K562 (cell line): ENCODE measurements at regions of chr1 and their contacts with region 1.

Region 1: DNA sequence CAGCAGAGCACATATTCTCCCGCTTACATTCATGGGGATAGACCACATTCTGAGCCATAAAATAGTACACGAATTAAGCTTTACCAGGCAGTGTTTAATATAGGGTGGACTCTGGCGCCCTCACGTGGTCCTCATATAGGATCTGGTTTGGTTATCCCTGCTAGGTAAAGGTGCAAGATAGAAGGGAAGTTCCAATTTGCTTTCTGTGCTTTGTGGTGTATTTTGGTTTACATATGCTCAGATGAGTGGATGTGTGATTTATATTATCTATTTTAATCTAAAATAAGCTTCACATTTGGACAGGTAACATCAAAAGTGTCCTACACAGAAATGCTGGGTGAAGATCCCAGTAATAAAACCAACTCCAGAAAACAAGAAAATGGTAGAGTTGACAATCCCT is 3.6 kb downstream of the CR1 start:
- DNase-seq: peak; percentile 70 to 91 (median 76)
- ATAC-seq: peak; percentile 90
- H3K4me3 ChIP-seq: no peak overlapping the region
- H3K27ac ChIP-seq: peak overlapping the region; percentile 20; the same call in 1 of the 3 replicates
- H3K4me1 ChIP-seq: peaks cover 10 to 23% of the 10 kb centered on the region in 2 experiments
- H3K27me3 ChIP-seq: no peaks in the 10 kb centered on the region
- CTCF ChIP-seq: peak; percentile 86 to 97 (median 88)
- EP300 ChIP-seq: no peak; the same call in 1 of the 2 replicates
- POLR2A ChIP-seq: no peak
- RAD21 ChIP-seq: peak; percentile 96 to 98

Region 2: GRCh38 chr1:206734499-206735142 is 765.0 kb before region 1 on chr1:
- CTCF ChIA-PET with region 1: no interaction called
- POLR2A ChIA-PET with region 1: no interaction called
- in situ Hi-C with region 1: no loop called
- intact Hi-C with region 1: loop called (anchors 5 kb)
- DNase-seq: peak; percentile 72 to 79 (median 76)
- ATAC-seq: peak; percentile 84
- H3K4me3 ChIP-seq: no peak overlapping the region
- H3K27ac ChIP-seq: no peak overlapping the region
- H3K4me1 ChIP-seq: peaks cover 10 to 17% of the 10 kb centered on the region in 2 experiments
- H3K27me3 ChIP-seq: no peaks in the 10 kb centered on the region; a peak in 1 of 5 replicates
- CTCF ChIP-seq: peak; percentile 89 to 96 (median 89)
- EP300 ChIP-seq: no peak
- POLR2A ChIP-seq: no peak
- RAD21 ChIP-seq: peak; percentile 88 to 89

Region 3: DNA sequence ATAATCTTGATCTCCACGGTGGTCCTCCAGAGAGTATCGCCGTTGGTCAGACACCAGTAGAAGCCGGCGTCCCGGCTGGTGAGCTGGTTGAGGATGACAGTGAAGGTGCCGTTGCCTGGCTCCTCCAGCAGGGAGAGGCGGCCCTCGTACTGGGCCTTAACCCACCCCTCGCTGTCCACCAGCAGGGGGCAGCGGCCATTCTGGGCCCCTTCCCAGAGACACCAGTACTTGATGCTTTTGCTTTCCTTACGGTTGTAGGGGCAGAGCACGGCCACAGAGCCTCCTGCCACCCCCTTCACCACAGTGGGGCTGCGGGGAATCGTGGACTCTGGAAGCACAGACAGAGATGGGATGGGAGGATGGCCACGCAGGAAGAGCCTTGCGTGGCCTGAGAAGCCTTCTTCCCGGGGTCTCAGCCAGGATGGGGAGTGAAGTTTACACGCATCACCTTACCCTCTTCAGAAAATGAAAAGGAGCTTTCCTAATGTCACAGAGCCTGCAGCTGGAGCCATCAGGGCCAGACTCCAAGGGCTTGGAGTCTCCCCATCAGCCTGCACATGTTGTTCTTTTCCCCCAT is 564.0 kb before region 1 on chr1:
- CTCF ChIA-PET with region 1: no interaction called
- POLR2A ChIA-PET with region 1: no interaction called
- in situ Hi-C with region 1: no loop called
- intact Hi-C with region 1: loop called (anchors 5 kb)
- DNase-seq: peak; percentile 91 to 96 (median 92)
- ATAC-seq: peak; percentile 99
- H3K4me3 ChIP-seq: no peak overlapping the region
- H3K27ac ChIP-seq: no peak overlapping the region
- H3K4me1 ChIP-seq: peaks cover 9% of the 10 kb centered on the region in 2 experiments; a peak in 4 of 5 replicates
- H3K27me3 ChIP-seq: no peaks in the 10 kb centered on the region
- CTCF ChIP-seq: peak; percentile 100
- EP300 ChIP-seq: peak; percentile 31; the same call in 1 of the 2 replicates
- POLR2A ChIP-seq: no peak
- RAD21 ChIP-seq: peak; percentile 99

Region 4: GRCh38 chr1:207181838-207182237 is 317.7 kb before region 1 on chr1:
- CTCF ChIA-PET with region 1: interaction called, 3 read pairs
- POLR2A ChIA-PET with region 1: no interaction called
- in situ Hi-C with region 1: no loop called
- intact Hi-C with region 1: loop called (anchors 5 kb)
- DNase-seq: peak in 1 of 4 experiments; percentile 28
- ATAC-seq: peak; percentile 41; the same call in 1 of the 3 replicates
- H3K4me3 ChIP-seq: no peak overlapping the region
- H3K27ac ChIP-seq: no peak overlapping the region
- H3K4me1 ChIP-seq: no peaks in the 10 kb centered on the region
- H3K27me3 ChIP-seq: no peaks in the 10 kb centered on the region
- CTCF ChIP-seq: peak in 2 of 3 experiments; percentile 29 to 66; a peak in 3 of 6 replicates
- EP300 ChIP-seq: no peak
- POLR2A ChIP-seq: no peak
- RAD21 ChIP-seq: peak; percentile 87 to 93

Region 5: DNA sequence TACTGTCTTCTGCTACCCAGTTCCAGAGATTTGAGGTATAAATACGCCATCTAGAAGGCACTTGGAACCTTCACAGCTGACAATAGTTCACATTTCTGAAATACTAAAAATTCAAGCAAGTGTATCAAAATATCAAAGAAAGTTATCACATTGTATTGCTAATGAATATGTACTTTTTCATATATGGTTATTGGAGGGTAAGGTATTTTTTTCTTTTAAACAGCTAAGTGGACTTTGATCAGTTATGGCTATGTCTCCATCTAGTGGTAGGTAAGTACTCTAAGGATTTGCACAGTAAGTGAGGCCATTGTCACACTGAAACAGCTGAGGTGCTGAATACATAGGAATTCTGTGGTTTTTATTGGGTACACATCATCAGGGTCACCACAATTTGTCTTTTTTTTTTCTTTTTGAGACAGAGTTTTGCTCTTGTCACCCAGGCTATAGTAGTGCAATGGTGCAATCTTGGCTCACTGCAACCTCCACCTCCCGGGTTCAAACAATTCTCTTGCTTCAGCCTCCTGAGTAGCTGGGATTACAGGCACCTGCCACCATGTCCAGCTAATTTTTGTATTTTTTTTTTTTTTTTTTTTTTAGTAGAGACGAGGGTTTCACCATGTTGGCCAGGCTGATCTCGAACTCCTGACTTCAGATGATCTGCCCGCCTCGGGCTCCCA is 94.6 kb before region 1 on chr1:
- CTCF ChIA-PET with region 1: interaction called, 6 read pairs
- POLR2A ChIA-PET with region 1: no interaction called
- in situ Hi-C with region 1: no loop called
- intact Hi-C with region 1: loop called (anchors 1 kb)
- DNase-seq: peak; percentile 66 to 78 (median 68)
- ATAC-seq: peak; percentile 98
- H3K4me3 ChIP-seq: no peak overlapping the region
- H3K27ac ChIP-seq: no peak overlapping the region
- H3K4me1 ChIP-seq: peaks cover 0 to 7% of the 10 kb centered on the region in 2 experiments; a peak in 2 of 5 replicates
- H3K27me3 ChIP-seq: no peaks in the 10 kb centered on the region
- CTCF ChIP-seq: peak; percentile 71 to 86 (median 74)
- EP300 ChIP-seq: no peak
- POLR2A ChIP-seq: no peak
- RAD21 ChIP-seq: peak; percentile 95 to 99

Region 6: GRCh38 chr1:207519505-207520404 is 20.2 kb after region 1 on chr1:
- CTCF ChIA-PET with region 1: interaction called, 3 read pairs
- POLR2A ChIA-PET with region 1: interaction called, 5 read pairs
- in situ Hi-C with region 1: no loop called
- intact Hi-C with region 1: loop called (anchors 1 kb)
- DNase-seq: peak; percentile 42 to 100 (median 68)
- ATAC-seq: peak; percentile 91
- H3K4me3 ChIP-seq: peak overlapping the region; percentile 27
- H3K27ac ChIP-seq: peak overlapping the region; percentile 92
- H3K4me1 ChIP-seq: peaks cover 13 to 25% of the 10 kb centered on the region in 2 experiments; a peak in 4 of 5 replicates
- H3K27me3 ChIP-seq: no peaks in the 10 kb centered on the region
- CTCF ChIP-seq: no peak
- EP300 ChIP-seq: peak; percentile 94
- POLR2A ChIP-seq: peak; percentile 89
- RAD21 ChIP-seq: no peak

Region 7: GRCh38 chr1:207603777-207604176 is 104.2 kb after region 1 on chr1:
- CTCF ChIA-PET with region 1: no interaction called
- POLR2A ChIA-PET with region 1: no interaction called
- in situ Hi-C with region 1: no loop called
- intact Hi-C with region 1: no loop called
- DNase-seq: peak in 1 of 4 experiments; percentile 21
- ATAC-seq: no peak
- H3K4me3 ChIP-seq: no peak overlapping the region
- H3K27ac ChIP-seq: no peak overlapping the region
- H3K4me1 ChIP-seq: peaks cover 0 to 8% of the 10 kb centered on the region in 2 experiments; a peak in 2 of 5 replicates
- H3K27me3 ChIP-seq: no peaks in the 10 kb centered on the region
- CTCF ChIP-seq: no peak
- EP300 ChIP-seq: no peak
- POLR2A ChIP-seq: no peak
- RAD21 ChIP-seq: no peak

Region 8: GRCh38 chr1:207698822-207699483 is 199.4 kb after region 1 on chr1:
- CTCF ChIA-PET with region 1: interaction called, 6 read pairs
- POLR2A ChIA-PET with region 1: no interaction called
- in situ Hi-C with region 1: no loop called
- intact Hi-C with region 1: loop called (anchors 1 kb)
- DNase-seq: peak; percentile 30 to 87 (median 37)
- ATAC-seq: peak; percentile 92
- H3K4me3 ChIP-seq: no peak overlapping the region
- H3K27ac ChIP-seq: no peak overlapping the region
- H3K4me1 ChIP-seq: no peaks in the 10 kb centered on the region
- H3K27me3 ChIP-seq: no peaks in the 10 kb centered on the region
- CTCF ChIP-seq: peak; percentile 76 to 98 (median 95)
- EP300 ChIP-seq: no peak
- POLR2A ChIP-seq: no peak
- RAD21 ChIP-seq: peak; percentile 96 to 97